Calu3 (cell line): ENCODE measurements at regions of chr6 and their contacts with region 1.

Region 1: DNA sequence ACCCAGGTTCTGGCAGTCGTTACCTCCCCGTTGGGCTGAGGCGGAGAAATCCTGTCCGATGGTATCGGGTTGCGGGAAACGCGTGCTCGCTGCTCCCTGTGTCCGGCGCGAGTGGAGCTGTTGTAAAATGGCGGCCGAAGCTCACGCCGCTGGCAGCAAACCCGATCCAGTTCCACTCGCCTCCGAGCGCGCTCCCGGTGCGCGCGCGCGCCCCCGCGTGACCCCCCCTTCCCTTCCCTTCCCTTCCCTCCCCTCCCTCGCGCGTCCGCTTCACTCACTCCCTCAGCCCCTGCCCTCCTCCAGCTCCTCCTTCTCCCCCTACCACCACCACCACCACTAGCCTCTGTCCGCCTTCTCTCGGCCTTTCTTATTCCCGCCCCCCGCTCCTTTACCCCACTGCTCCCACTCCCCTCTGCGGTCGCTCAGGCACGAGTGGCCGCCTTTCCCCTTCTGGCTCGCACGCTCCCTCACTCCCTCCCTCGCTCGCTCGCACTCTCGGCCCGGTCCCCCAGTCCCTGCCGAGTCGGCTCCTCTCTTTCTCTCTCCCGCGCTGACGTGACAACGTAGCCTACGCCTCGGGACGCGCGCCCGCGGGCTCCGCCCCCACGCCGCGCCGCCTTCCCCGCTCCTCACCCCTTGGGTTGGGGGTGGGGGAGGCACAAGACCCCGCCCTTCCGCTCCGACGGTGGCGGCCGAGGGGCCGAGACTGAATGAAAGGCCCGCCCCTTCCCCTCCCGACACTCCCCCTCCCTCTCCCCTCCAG is at the start of gene SYNCRIP:
- DNase-seq: peak; percentile 99
- H3K4me3 Mint-ChIP-seq: peak within 1 kb of the TSS; percentile 88
- H3K27ac Mint-ChIP-seq: peak within 1 kb of the TSS; percentile 89
- H3K4me1 Mint-ChIP-seq: peaks cover 46% of the 10 kb centered on the region
- H3K27me3 Mint-ChIP-seq: no peaks in the 10 kb centered on the region
- CTCF ChIP-seq: no peak
- total RNA-seq, gene SYNCRIP: 153 and 164 TPM in 2 replicates

Region 2: DNA sequence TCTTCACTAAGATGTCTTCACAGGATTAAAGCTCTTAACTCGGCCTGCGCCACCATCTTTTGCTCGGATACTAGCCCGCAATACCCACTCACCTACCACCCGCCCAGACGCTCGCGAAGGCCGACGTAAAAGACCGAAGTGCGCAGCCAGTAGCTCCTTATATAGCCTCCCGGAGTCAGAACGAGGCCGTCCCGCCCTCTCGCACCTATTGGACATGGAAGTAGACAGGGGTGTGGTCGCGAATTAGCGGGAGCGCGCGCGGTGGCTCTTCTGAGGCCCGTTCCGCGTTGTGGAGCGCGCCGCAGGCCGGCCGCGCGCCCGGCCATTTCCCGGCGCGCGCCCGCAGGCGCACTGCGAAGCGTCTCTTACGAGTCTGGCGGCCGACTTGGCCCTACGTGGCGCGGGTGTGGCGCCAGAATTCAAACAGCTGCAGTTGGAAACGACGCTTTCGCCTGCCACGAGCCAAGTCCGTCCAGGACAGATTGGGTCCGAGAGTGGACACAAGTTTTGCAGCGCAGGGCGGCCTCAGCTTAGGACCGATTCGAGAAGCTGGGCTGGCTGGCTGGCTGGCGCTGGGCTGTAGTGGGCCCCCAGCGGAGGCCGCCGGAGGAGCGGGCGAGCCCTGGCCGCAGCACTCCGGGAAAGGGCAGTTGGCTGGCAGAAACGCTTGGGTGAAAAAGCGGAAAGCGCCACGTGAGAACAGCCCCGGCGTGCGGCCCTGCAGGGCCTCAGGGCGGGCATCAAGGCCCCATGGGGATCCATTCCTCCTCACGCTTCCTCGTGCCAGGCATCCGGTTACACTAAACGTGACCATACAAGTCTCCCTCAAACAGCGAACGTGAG is 35.9 kb after region 1 on chr6:
- CTCF ChIA-PET with region 1: interaction called, 9 read pairs
- intact Hi-C with region 1: loop called (anchors 1 kb)
- DNase-seq: peak; percentile 96
- H3K4me3 Mint-ChIP-seq: peak overlapping the region; percentile 98
- H3K27ac Mint-ChIP-seq: peak overlapping the region; percentile 100
- H3K4me1 Mint-ChIP-seq: peaks cover 35% of the 10 kb centered on the region
- H3K27me3 Mint-ChIP-seq: peaks cover 12% of the 10 kb centered on the region
- CTCF ChIP-seq: no peak

Region 3: DNA sequence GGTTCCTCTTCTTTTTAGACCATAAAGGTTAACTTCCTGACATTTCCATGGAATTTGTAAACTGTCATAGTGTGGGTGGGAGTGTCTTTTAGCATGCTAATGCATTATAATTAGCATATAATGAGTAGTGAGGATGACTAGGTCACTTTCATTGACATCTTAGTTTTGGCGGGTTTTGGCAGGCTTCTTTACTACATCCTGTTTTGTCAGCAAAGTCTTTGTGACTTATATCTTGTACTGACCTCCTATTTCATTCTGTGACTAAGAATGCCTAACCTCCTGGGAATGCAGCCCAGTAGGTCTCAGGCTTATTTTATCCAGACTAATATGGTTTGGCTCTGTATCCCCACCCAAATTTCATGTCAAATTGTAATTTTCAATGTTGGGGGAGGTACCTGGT is 149.3 kb after region 1 on chr6:
- CTCF ChIA-PET with region 1: no interaction called
- intact Hi-C with region 1: no loop called
- DNase-seq: no peak
- H3K4me3 Mint-ChIP-seq: no peak overlapping the region
- H3K27ac Mint-ChIP-seq: no peak overlapping the region
- H3K4me1 Mint-ChIP-seq: no peaks in the 10 kb centered on the region
- H3K27me3 Mint-ChIP-seq: peaks cover 20% of the 10 kb centered on the region
- CTCF ChIP-seq: no peak